ENCODE measurements at regions of chr12 and their contacts with region 1.

Region 1: DNA sequence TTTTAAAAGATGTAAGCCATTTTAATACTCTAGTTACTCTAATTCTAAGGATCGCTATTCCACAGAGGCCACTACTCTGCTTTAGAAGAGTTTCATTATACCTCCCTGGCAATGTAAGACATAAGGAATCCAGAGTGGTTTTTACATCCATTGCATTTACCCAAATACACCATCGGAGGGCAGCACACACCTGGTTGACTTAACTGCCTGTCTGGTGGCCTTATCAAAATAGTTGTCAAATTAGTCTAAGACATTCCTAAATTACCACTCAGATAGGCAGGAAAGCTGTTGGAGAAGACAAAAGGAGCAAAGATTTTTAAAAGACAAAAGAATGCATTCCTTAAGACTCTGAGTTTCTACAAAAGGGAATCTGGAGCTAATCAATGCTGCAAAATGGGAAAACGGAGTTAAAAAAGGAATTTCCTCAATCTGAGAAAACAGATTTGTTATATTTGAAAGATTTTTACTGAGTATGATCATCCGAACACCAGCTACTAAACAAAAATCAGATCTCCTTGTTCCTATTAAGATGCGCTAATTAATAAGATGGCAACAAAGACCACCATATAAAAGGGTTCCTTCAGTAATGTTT is 33.8 kb upstream of the FGD4 start:
- DNase-seq: peak in 1 of 2 donors; percentile 69
- H3K4me3 ChIP-seq: no peak overlapping the region
- H3K27ac ChIP-seq: no peak overlapping the region
- H3K4me1 ChIP-seq: no peaks in the 10 kb centered on the region
- H3K27me3 ChIP-seq: no peaks in the 10 kb centered on the region
- CTCF ChIP-seq: peak; percentile 40 to 79 (median 66)

Region 2: DNA sequence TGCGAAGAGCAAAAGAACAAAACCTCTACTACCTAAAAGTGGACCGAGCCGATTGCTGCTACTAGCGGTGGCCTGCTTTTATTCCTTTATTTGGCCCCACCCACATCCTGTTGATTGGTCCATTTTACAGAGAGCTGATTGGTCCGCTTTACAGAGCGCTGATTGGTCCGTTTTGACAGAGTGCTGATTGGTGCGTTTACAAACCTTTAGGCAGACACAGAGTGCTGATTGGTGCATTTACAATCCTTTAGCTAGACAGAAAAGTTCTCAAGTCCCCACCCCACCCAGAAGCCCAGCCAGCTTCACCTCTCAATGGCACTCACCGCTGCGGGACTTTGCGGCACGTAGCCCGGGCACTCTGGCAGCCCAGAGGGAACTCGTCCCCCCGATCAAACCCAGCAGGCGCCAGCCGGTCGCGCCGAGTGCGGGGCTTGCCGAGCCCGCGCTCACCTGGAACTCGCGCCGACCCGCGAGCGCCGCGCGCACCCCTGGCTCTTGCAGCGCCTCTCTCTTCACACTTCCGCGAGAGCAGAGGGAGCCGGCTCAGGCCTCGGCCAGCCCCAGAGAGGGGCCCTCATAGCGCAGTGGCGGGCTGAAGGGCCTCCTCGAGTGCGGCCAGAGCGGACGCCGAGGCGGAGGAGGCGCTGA is 25.1 kb after region 1 on chr12:
- intact Hi-C with region 1: no loop called
- DNase-seq: no peak
- H3K4me3 ChIP-seq: peak overlapping the region; percentile 45 to 58
- H3K27ac ChIP-seq: no peak overlapping the region
- H3K4me1 ChIP-seq: no peaks in the 10 kb centered on the region
- H3K27me3 ChIP-seq: no peaks in the 10 kb centered on the region
- CTCF ChIP-seq: no peak

Region 3: DNA sequence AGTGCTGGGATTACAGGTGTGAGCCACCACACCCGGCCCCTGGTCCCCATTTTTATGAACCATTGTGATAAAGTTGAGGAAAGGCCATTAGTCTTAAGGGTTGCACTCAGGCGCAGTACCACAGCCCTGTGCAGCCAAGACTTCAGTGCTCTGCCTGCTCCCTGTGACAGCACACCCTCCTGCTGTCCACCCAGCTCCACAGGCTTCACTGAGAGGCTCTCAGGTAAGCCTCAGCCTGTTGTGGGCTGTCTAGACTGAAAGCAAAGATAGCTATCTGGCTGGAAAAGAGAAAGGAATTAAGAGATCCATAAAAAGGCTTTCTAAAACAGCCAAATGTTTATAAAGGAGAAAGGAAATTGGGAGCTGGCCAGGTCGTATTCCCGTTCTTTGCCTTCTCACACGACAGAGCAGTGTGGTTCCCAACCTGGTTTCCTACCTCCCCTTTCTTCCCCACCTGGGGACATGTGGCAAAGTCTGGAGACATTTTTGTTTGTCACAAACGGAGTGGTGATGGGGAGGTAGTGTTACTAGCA is 294.4 kb after region 1 on chr12:
- intact Hi-C with region 1: loop called (anchors 5 kb)
- DNase-seq: no peak
- H3K4me3 ChIP-seq: no peak overlapping the region
- H3K27ac ChIP-seq: no peak overlapping the region
- H3K4me1 ChIP-seq: no peaks in the 10 kb centered on the region
- H3K27me3 ChIP-seq: no peaks in the 10 kb centered on the region
- CTCF ChIP-seq: no peak

Region 4: DNA sequence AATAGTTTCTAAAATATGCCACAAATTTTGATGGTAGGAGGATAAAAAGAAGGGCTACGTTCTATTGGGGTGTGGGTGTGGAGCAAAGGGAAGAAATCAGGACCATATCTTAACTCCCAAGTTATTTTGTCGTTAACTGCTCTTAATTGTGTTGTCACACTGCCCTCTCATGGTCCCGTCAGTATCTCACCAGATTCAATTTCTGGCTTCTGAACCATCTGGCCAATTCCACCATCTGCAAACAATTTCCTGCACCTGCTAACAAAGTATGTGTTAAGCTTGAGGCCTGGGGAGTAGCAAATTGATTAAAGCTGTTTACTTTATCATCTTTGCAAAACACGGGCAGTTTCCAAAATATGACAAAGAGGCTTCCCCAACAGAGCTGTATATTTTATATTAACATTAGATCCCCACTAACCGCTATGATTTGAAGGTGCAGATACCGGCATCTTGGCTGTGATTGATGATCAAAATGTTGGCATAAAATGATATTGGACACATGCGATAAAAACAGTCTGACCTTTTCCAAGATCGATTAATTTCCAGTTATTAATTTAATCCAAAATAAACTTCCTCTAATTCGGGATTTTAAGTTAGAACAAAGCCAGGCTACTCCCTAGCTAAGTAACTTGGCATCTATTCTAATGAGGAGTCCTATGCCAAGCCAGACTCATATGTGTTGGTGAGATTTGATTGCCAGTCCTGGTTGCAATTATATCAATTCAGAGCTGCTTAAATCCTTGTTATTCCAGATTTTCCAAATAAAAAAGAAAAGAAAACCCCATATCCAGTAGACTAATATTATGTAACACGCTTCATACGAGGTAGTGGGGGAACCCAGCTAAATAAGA is 306.6 kb after region 1 on chr12:
- intact Hi-C with region 1: loop called (anchors 2 kb)
- DNase-seq: no peak
- H3K4me3 ChIP-seq: no peak overlapping the region
- H3K27ac ChIP-seq: no peak overlapping the region
- H3K4me1 ChIP-seq: no peaks in the 10 kb centered on the region
- H3K27me3 ChIP-seq: no peaks in the 10 kb centered on the region
- CTCF ChIP-seq: peak; percentile 36 to 55 (median 37)

Measured in ascending aorta (tissue), 2 donors.